ENCODE measurements at regions of chr7 and their contacts with region 1.

Region 1: DNA sequence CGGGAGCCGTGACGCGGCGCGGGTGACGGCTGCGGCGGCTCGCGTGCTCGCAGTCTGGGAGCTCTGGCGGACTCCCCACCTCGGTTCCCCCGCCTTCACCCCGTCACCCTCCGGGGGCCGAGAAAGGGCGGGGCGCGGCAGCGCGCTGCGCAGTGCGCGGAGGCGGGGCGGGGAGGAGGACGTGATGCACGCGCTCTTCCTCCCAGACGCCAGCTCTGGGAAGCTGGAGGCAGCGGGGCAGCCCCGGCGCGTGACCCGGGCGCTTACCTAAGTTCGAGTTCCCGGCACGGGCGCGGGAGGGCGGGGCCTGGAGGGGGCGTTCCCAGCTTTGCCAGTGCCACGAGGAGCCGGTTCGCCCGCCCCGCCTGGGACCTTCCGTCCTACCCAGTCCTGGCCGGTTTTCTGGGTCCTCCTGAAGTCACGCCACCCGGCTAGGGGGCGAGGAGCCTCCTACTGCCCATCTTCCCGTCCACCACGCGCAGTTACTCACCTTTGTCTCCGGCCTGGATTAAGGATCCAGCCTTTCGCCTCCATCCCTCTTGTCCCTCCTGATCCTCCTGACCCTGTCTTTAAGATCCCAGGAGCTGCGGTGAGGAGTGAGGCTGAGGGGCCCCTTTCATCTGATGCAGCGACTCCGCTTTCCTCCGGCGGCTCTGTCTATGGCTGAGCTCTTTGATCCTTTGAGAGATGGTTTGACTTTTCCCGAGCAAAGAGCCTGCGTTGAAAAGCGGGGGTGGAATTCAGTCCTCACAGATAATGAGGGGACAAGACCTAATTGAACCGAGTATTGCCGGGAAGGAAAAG is 470 bp upstream of the NAMPT start:
- DNase-seq: peak; percentile 99
- ATAC-seq: peak; percentile 97

Region 2: DNA sequence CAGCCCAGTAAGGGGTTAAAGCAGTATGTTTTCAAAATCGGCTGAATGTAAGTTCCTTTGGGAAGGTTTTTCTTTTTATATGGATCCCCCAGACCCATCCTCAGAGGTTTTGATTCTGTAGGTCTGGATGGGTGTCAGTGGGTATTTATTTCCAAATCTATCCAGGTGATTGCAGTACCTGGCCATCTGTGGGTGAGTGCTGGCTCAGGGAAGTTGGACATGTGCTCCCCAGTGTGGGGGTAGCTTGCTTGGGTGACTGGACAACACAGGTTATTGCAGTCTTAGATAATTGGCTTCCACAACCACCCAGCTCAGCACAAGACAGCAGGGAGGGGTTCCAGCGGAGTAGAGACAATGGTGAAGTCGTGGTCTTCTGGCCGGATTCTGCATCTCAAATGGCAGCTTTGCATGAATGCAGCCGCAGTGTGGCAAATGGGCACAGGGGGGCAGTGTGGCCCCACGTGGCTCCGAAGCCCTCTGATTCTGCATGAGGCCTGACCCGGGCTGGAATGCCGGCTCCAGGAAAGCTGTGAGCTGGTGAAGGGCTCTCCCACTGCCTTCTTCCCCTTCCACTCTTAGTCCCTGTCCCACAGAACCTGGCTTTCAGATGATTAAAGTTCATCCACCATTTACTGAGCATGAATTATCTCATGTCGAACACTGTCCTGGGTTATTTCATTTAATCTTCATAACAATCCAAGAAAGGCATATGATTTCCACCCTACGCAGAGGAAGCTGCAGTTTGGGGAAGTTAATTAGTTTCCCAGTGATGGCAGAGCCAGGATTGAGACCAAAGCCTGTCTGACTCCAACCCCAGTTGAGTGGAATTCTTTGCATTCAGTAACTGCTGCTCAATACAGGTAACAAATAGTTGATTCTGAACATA is 108.6 kb before region 1 on chr7:
- intact Hi-C with region 1: loop called (anchors 5 kb)
- DNase-seq: peak; percentile 91
- ATAC-seq: peak; percentile 90

Region 3: GRCh38 chr7:106216517-106216922 is 68.7 kb before region 1 on chr7:
- intact Hi-C with region 1: loop called (anchors 10 kb)
- DNase-seq: no peak
- ATAC-seq: peak; percentile 87

Region 4: GRCh38 chr7:106421181-106421762 is 136.0 kb after region 1 on chr7:
- intact Hi-C with region 1: loop called (anchors 5 kb)
- DNase-seq: peak; percentile 87
- ATAC-seq: peak; percentile 80

Region 5: DNA sequence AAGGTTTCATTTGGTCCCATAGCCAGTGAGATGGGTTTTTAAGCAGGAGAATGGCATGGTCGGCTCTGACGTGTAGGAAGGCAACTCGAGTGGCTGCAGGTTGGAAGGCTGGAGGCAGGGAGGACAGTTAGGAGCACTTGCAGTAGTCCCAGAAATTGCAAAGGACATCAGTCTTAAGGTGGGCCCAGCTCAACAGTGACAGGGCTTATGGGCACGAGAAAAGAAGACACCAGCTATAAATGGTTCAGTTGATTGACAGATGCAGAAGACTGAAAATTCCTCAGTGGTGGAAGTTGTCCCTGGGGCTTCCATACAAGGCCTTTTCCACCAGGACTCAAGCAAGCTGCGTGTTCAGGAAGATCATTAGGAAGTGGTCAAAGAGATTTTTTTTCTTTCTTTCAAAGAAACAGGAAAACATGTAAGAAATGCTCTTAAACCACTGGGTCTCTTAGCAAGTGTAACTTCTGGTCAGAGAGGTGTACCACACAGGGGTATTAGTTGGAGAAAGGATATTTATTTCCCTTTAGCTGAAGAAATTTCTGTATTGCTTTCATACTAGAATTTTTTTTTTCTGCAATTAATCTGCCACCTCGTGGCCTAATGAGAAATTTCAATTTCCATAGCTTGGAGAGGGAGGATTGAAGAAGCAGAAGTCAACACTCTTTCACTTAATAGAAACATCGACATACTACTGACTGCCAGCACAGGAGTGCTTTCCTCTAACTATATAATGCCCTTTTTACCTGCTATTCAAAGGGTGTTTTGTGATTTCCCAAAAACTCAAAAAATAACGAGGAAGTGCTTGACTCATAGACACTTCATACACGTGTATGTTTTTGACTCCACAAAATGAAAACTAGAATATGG is 177.0 kb after region 1 on chr7:
- intact Hi-C with region 1: loop called (anchors 10 kb)
- DNase-seq: peak; percentile 23
- ATAC-seq: peak; percentile 63